ENCODE measurements at regions of chr2 and their contacts with region 1.

Region 1: GRCh38 chr2:219278655-219279516 is at the start of gene DNAJB2:
- DNase-seq: peak; percentile 98
- H3K4me3 ChIP-seq: peak within 1 kb of the TSS; percentile 72 to 87 (median 84)
- H3K27ac ChIP-seq: peak within 1 kb of the TSS; percentile 98
- H3K4me1 ChIP-seq: peaks cover 13 to 16% of the 10 kb centered on the region in 2 donors
- H3K27me3 ChIP-seq: no peaks in the 10 kb centered on the region
- CTCF ChIP-seq: no peak
- POLR2A ChIP-seq: peak; percentile 70
- total RNA-seq, gene DNAJB2: 49.9 to 88.3 (median 59.0) TPM

Region 2: GRCh38 chr2:219234331-219234730 is 44.6 kb before region 1 on chr2:
- intact Hi-C with region 1: loop called (anchors 2 kb)
- DNase-seq: no peak
- H3K4me3 ChIP-seq: no peak overlapping the region
- H3K27ac ChIP-seq: no peak overlapping the region
- H3K4me1 ChIP-seq: peaks cover 0 to 16% of the 10 kb centered on the region in 2 donors
- H3K27me3 ChIP-seq: no peaks in the 10 kb centered on the region
- CTCF ChIP-seq: no peak
- POLR2A ChIP-seq: no peak

Region 3: GRCh38 chr2:219352448-219353023 is 73.7 kb after region 1 on chr2:
- intact Hi-C with region 1: no loop called
- DNase-seq: no peak
- H3K4me3 ChIP-seq: no peak overlapping the region
- H3K27ac ChIP-seq: no peak overlapping the region
- H3K4me1 ChIP-seq: no peaks in the 10 kb centered on the region
- H3K27me3 ChIP-seq: peaks cover 0 to 24% of the 10 kb centered on the region in 2 donors
- CTCF ChIP-seq: peak in 2 of 3 donors; percentile 41 to 54
- POLR2A ChIP-seq: no peak

Measured in breast epithelium (tissue), 4 donors.